GM12878 (cell line): ENCODE measurements at regions of chr3 and their contacts with region 1.

Region 1: GRCh38 chr3:58167431-58168351 is 43.1 kb downstream of the DNASE1L3 start:
- DNase-seq: no peak
- ATAC-seq: peak; percentile 99
- H3K4me3 ChIP-seq: no peak overlapping the region
- H3K27ac ChIP-seq: no peak overlapping the region
- H3K4me1 ChIP-seq: no peaks in the 10 kb centered on the region
- H3K27me3 ChIP-seq: no peaks in the 10 kb centered on the region
- CTCF ChIP-seq: peak; percentile 76 to 97 (median 95)
- EP300 ChIP-seq: no peak
- POLR2A ChIP-seq: no peak
- RAD21 ChIP-seq: peak; percentile 46

Region 2: DNA sequence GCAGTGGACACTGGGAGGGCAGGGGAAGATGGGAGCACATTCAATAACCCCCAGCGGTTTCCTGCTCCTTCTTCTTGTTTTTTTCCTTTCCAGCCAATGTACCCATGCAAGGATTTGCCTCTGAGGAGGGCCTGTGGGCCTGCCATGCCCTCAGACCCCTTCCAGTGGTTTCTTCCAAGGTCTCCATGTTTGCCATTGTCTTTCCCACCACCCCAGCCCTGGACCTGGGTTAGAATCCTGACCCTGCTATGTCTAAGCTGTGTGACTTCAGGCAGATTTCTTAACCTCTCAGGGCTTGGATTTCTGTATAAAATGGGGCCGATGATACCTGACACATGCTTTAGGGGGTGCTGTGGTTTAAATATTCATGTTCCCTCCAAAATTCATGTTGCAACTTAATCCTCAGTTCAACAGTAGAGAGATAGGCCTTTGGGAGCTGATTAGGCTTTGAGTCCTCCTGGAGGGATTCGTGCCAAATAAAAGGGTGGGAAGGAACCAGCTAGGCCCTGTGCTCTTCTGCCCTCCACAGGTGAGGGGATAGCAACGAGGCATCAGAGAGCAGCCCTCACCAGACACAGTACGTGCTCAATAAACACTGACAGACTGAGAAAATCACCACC is 205.8 kb before region 1 on chr3:
- CTCF ChIA-PET with region 1: interaction called, 14 read pairs
- POLR2A ChIA-PET with region 1: no interaction called
- RAD21 ChIA-PET with region 1: interaction called, 4 read pairs
- SMC1A ChIA-PET with region 1: interaction called, 19 read pairs
- in situ Hi-C with region 1: no loop called
- intact Hi-C with region 1: no loop called
- DNase-seq: no peak
- ATAC-seq: peak; percentile 57
- H3K4me3 ChIP-seq: no peak overlapping the region
- H3K27ac ChIP-seq: no peak overlapping the region
- H3K4me1 ChIP-seq: peaks cover 14% of the 10 kb centered on the region
- H3K27me3 ChIP-seq: no peaks in the 10 kb centered on the region
- CTCF ChIP-seq: peak; percentile 28 to 49 (median 40); a peak in 4 of 6 replicates
- EP300 ChIP-seq: no peak
- POLR2A ChIP-seq: no peak
- RAD21 ChIP-seq: peak; percentile 61

Region 3: DNA sequence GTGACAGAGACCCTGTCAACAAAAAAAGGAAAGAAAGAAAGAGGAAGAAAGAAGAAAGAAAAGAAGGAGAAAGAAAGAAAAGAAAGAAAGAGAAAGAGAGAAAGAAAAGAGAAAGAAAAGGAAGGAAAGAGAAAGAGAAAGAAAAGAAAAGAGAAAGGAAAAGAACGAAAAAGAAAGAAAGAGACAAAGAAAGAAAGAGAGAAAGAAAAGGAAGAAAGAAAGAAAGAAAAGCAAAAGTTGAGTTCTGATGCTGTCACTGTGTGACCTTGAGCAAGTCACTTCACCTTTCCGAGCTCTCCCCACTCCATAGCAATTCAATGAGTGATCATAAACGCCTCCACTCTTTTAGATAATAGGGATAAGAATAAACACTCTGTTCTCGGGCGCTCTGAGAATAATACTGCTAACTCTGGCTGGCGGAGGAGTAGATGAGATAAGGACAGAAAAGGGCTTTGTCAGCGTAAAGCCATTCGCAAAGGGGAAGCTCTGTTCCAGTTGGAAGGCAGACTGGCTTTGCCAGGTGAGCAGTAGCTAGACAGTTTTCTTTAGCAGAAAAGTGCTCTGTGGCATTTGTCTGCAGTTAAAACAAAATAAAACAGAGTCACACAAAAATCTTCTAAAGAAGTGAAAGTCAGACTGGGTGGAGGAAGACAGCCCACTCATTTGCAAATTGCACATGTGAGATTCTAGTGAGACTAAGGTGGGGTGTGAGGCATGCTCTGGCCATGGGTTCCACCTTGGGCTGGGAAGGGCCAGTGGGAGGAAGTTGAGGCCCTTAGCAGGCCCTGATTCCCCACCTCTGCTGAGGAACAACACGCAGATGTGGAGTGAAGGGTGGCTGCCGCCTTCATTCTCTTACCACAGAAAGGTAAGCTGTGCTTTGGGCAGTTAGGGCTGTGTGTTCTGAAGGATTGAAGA is 169.1 kb before region 1 on chr3:
- CTCF ChIA-PET with region 1: interaction called, 13 read pairs
- POLR2A ChIA-PET with region 1: no interaction called
- RAD21 ChIA-PET with region 1: no interaction called
- SMC1A ChIA-PET with region 1: interaction called, 5 read pairs
- in situ Hi-C with region 1: no loop called
- intact Hi-C with region 1: no loop called
- DNase-seq: no peak
- ATAC-seq: peak; percentile 90
- H3K4me3 ChIP-seq: peak overlapping the region; percentile 59; the same call in 1 of the 2 replicates
- H3K27ac ChIP-seq: peak overlapping the region; percentile 81
- H3K4me1 ChIP-seq: peaks cover 8% of the 10 kb centered on the region
- H3K27me3 ChIP-seq: no peaks in the 10 kb centered on the region
- CTCF ChIP-seq: no peak
- EP300 ChIP-seq: no peak
- POLR2A ChIP-seq: no peak
- RAD21 ChIP-seq: no peak

Region 4: DNA sequence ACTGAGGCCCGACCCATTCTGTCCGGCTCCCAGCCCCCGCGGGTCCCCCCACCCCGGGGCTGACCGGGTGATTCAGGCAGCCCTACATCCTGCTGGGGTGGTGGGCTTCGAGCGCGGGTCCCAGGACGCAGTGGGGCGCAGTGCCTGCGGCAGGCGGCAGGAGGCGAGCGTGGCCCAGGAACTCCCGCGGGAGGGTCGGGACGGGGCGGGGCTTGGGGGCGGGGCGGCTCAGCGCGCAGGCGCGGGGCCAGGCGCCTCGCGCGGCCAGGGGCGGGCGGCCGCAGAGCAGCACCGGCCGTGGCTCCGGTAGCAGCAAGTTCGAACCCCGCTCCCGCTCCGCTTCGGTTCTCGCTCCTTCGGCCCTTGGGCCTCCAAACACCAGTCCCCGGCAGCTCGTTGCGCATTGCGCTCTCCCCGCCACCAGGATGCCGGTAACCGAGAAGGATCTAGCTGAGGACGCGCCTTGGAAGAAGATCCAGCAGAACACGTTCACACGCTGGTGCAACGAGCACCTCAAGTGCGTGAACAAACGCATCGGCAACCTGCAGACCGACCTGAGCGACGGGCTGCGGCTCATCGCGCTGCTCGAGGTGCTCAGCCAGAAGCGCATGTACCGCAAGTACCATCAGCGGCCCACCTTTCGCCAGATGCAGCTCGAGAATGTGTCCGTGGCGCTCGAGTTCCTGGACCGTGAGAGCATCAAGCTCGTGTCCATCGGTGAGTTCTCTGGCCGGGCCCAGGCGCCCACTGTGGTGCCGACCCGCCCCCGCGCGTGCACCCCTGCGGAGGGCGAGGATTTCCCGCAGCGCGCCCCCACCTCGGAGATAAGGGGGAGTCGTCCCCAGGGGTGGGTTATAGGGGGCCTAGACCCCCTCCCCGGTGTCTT is 159.3 kb before region 1 on chr3 and contains the start of gene FLNB:
- CTCF ChIA-PET with region 1: interaction called, 78 read pairs
- POLR2A ChIA-PET with region 1: no interaction called
- RAD21 ChIA-PET with region 1: interaction called, 18 read pairs
- SMC1A ChIA-PET with region 1: interaction called, 28 read pairs
- in situ Hi-C with region 1: no loop called
- intact Hi-C with region 1: no loop called
- DNase-seq: no peak
- ATAC-seq: peak; percentile 81
- H3K4me3 ChIP-seq: peak within 1 kb of the TSS; percentile 77
- H3K27ac ChIP-seq: peak within 1 kb of the TSS; percentile 45
- H3K4me1 ChIP-seq: peaks cover 16% of the 10 kb centered on the region
- H3K27me3 ChIP-seq: no peaks in the 10 kb centered on the region
- CTCF ChIP-seq: peak; percentile 72 to 95 (median 90)
- EP300 ChIP-seq: no peak
- POLR2A ChIP-seq: peak; percentile 90
- RAD21 ChIP-seq: peak; percentile 91
- polyA plus RNA-seq, gene FLNB: 13.6 to 15.8 TPM

Region 5: DNA sequence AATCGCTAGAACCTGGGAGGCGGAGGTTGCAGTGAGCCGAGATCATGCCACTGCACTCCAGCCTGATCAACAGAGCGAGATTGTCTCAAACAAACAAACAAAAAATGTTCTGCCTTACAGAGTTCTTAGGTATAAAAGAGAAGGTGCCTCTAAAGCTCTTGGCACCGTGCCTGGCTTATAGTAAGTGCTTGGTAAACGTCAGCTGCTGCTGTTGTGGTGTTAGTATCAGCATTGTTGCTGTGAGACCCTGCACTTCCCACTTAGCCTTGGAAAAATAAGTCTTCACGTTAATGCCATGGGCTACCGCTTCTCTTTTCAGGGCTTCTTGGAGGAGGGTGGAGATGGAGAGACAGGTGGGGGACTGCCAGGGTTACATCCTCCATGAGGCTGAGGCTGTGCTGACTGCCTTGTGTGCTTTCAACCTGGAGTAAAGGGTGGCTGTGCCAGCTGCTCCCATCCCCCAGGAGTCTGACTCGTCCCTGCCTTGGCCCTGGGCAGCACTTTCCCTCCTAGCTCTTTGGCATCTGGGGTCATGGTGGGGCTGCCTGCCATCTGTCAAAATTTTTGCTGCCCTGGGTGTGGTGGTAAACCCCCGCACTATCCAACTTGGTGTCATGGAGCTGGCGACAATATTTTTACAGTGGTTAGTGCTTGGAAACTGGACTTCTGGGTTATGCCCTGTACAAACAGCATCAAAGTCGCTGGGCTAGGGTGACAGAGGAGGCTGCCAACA is 141.7 kb before region 1 on chr3:
- CTCF ChIA-PET with region 1: interaction called, 8 read pairs
- POLR2A ChIA-PET with region 1: no interaction called
- RAD21 ChIA-PET with region 1: no interaction called
- SMC1A ChIA-PET with region 1: interaction called, 12 read pairs
- in situ Hi-C with region 1: no loop called
- intact Hi-C with region 1: no loop called
- DNase-seq: no peak
- ATAC-seq: no peak
- H3K4me3 ChIP-seq: no peak overlapping the region
- H3K27ac ChIP-seq: no peak overlapping the region
- H3K4me1 ChIP-seq: peaks cover 13% of the 10 kb centered on the region
- H3K27me3 ChIP-seq: no peaks in the 10 kb centered on the region
- CTCF ChIP-seq: no peak
- EP300 ChIP-seq: no peak
- POLR2A ChIP-seq: no peak
- RAD21 ChIP-seq: no peak

Region 6: DNA sequence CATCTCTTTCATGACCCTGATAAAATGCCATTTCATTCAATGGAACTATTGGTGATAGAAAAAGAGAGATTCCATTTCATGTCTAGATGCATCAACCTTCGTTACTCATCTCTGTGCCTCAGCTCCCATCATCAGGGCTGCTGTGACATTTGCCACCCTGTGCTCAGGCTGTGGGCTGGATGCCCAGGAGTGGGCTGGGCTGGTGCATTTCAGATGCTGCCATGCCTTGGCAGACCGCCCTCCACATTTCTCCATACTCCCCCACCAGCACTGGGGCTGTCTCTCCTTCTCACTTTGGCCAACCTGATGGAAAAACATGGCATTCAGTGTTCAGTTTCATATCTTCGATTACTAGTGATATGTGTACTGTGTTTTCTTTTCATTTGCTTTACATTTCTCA is 16.1 kb before region 1 on chr3:
- CTCF ChIA-PET with region 1: interaction called, 22 read pairs
- POLR2A ChIA-PET with region 1: no interaction called
- RAD21 ChIA-PET with region 1: no interaction called
- SMC1A ChIA-PET with region 1: interaction called, 5 read pairs
- in situ Hi-C with region 1: no loop called
- intact Hi-C with region 1: no loop called
- DNase-seq: no peak
- ATAC-seq: no peak
- H3K4me3 ChIP-seq: no peak overlapping the region
- H3K27ac ChIP-seq: no peak overlapping the region
- H3K4me1 ChIP-seq: no peaks in the 10 kb centered on the region
- H3K27me3 ChIP-seq: no peaks in the 10 kb centered on the region
- CTCF ChIP-seq: no peak
- EP300 ChIP-seq: no peak
- POLR2A ChIP-seq: no peak
- RAD21 ChIP-seq: no peak